ENCODE measurements at regions of chr5 and their contacts with region 1.

Region 1: DNA sequence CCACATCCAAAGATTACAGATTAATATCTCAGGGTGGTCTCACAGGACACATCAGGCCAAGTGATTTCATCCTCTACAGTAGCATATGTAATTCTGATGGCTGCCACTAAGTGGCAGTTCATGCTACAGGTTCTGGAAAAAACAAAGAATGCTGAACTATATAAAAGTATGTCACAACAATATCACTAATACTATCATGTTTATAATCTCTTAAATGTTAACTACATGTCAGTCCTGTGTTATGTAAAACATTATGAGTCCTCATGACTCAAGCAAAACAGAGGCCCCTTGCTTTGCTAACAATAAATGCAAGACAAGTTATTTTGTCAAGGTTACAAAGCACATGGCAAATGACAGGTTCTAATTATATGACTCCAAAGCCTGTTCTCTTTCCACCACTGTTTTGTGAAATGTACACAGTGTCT is 233.2 kb downstream of the FBXL17 start:
- DNase-seq: peak in 1 of 2 experiments; percentile 44
- H3K4me3 ChIP-seq: no peak overlapping the region
- H3K27ac ChIP-seq: no peak overlapping the region
- H3K4me1 ChIP-seq: no peaks in the 10 kb centered on the region
- H3K27me3 ChIP-seq: no peaks in the 10 kb centered on the region
- CTCF ChIP-seq: peak; percentile 63

Region 2: GRCh38 chr5:108136493-108136892 is 12.2 kb before region 1 on chr5:
- CTCF ChIA-PET with region 1: no interaction called
- POLR2A ChIA-PET with region 1: interaction called, 13 read pairs
- intact Hi-C with region 1: no loop called
- DNase-seq: no peak
- H3K4me3 ChIP-seq: no peak overlapping the region
- H3K27ac ChIP-seq: no peak overlapping the region
- H3K4me1 ChIP-seq: no peaks in the 10 kb centered on the region
- H3K27me3 ChIP-seq: no peaks in the 10 kb centered on the region
- CTCF ChIP-seq: no peak

Region 3: GRCh38 chr5:108560581-108560980 is 411.9 kb after region 1 on chr5:
- CTCF ChIA-PET with region 1: no interaction called
- POLR2A ChIA-PET with region 1: no interaction called
- intact Hi-C with region 1: no loop called
- DNase-seq: no peak
- H3K4me3 ChIP-seq: no peak overlapping the region
- H3K27ac ChIP-seq: no peak overlapping the region
- H3K4me1 ChIP-seq: no peaks in the 10 kb centered on the region
- H3K27me3 ChIP-seq: no peaks in the 10 kb centered on the region
- CTCF ChIP-seq: no peak